Heart right ventricle (tissue), 16 donors: ENCODE measurements at regions of chr1 and their contacts with region 1.

Region 1: GRCh38 chr1:25810341-25811299 is 9.1 kb upstream of the MTFR1L start:
- DNase-seq: peak; percentile 58 to 81
- ATAC-seq: peak; percentile 39 to 72 (median 58)
- H3K4me3 ChIP-seq: no peak overlapping the region
- H3K27ac ChIP-seq: peak overlapping the region in 2 of 10 donors; percentile 15 to 41
- H3K4me1 ChIP-seq: peaks cover 9 to 57% (median 41%) of the 10 kb centered on the region in 9 donors
- H3K27me3 ChIP-seq: no peaks in the 10 kb centered on the region
- CTCF ChIP-seq: peak; percentile 82 to 95 (median 93)

Region 2: DNA sequence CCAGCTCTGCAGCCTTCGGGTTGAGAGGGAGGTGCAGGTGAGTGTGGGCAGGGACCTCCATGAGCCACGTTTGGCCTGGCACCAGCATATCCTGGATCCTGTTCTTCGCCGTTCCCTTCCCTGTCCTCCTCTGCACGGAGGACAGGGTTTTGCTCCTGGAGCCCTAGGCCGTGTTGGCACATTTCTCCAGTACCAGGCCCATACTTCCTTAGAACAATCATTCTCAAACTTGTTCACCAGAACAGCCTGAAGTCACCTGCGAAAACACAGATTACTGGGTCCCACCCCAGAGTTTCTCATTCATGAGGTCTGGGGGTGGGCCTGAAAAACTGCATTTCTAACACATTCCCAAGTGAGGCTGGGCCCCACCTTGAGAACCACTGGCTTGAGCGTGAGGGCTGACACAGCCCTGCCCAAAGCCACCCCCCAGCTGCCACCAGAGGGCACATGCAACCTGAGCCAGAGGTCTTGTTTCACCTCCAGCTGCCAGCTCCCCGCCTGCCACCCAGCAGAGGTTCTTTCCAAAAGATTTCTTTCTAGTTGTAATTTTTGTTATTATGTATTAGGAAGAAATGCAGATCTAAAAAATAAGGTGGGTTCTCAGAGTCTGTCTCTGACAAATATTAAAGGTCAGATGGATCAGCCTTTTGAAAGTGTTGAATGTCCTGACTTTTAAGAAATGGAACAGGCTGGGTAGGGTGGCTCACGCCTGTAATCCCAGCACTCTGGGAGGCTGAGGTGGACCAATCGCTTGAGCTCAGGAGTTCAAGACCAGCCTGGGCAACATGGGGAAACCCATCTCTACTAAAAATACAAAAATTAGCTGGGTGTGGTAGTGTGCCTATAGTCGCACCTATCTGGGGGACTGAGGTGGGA is 306.8 kb before region 1 on chr1:
- intact Hi-C with region 1: loop called in 2 of 10 experiments (anchors 5 to 10 kb)
- DNase-seq: peak; percentile 53 to 58
- ATAC-seq: peak in 7 of 8 donors; percentile 60 to 87 (median 84)
- H3K4me3 ChIP-seq: no peak overlapping the region
- H3K27ac ChIP-seq: no peak overlapping the region
- H3K4me1 ChIP-seq: peaks cover 0 to 35% (median 7%) of the 10 kb centered on the region in 9 donors
- H3K27me3 ChIP-seq: no peaks in the 10 kb centered on the region
- CTCF ChIP-seq: peak; percentile 26 to 68 (median 54)

Region 3: DNA sequence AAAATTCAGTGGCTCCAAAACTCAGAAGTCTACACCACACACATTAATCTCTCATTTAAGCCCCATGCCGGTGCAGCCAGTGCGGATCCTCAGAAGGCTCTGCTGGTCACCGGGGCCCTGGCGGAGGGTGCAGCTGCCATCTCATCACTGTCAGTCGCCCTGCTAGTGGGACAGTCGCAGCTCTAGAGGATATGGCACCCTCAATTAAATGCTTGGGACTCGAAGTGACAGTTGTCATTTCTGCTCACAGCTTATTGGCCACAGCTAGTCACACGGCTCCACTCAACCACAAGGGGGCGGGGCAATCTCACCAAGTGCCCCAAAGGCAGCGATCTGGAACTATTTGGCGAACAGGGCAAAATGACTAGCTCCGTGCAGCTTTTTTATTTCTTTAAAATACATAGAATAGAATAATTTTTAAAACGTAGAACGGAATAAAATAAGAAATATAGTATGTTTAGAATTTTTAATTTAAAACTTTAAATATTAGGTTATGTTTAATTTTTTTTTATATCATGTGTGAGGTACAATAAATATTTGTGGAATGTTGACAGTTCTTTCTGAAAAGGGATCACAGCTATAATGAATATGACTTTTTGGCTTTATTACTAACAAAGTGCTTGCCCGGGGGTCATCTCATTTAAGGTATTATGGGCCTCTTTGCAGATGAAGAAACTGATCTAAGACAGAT is 202.0 kb before region 1 on chr1:
- intact Hi-C with region 1: loop called in 1 of 10 experiments (anchors 5 kb)
- DNase-seq: peak; percentile 86 to 90
- ATAC-seq: peak; percentile 67 to 95 (median 92)
- H3K4me3 ChIP-seq: peak overlapping the region in 6 of 10 donors; percentile 19 to 44 (median 30)
- H3K27ac ChIP-seq: no peak overlapping the region
- H3K4me1 ChIP-seq: peaks cover 0 to 9% (median 6%) of the 10 kb centered on the region in 9 donors
- H3K27me3 ChIP-seq: peaks cover 0 to 14% (median 0%) of the 10 kb centered on the region in 7 donors
- CTCF ChIP-seq: peak; percentile 51 to 89 (median 79)

Region 4: DNA sequence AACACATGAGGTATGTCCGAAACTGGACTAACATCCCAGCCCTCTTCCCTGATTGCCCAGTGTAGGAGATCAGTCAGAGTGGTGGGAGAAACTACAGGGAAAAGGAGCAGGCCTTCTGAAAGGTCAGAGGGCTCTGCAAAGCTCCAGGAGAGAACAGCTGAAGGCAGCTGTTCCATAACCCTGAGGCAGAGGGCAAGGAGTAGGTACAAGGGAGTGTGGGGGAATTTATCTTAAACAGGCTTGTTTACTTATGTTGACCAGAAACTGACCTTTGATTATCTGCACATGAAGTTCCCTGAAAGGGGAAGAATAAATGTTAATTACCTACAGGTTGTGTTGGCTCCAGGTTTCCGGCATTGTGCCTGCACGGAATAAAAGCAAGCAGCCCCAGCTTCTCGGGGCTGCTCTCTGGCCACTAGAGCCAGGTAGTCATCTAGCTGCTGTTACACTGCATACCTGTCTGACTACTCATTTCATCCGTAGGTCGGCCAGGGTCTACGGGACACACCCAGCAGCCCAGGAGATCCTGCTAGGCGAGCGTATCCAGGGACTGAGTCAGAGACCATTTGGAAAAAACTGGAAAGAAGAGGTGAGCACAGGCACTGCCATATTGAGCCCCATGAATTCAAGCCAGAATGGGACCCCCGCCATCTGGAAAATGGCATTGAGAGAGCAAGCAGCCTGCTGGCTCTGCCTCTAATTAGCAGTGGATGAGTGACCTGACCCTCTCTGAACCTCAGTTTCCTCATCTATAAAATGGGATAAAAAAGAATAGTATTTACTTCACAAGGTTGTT is 79.8 kb after region 1 on chr1:
- intact Hi-C with region 1: no loop called
- DNase-seq: no peak
- ATAC-seq: no peak
- H3K4me3 ChIP-seq: no peak overlapping the region
- H3K27ac ChIP-seq: no peak overlapping the region
- H3K4me1 ChIP-seq: peaks cover 0 to 7% (median 4%) of the 10 kb centered on the region in 9 donors
- H3K27me3 ChIP-seq: no peaks in the 10 kb centered on the region
- CTCF ChIP-seq: no peak